ENCODE measurements at regions of chrX and their contacts with region 1.

Region 1: GRCh38 chrX:22135994-22136684 is 104.0 kb downstream of the PHEX start:
- DNase-seq: peak; percentile 30
- H3K4me3 ChIP-seq: no peak overlapping the region
- H3K27ac ChIP-seq: peak overlapping the region in 1 of 2 experiments; percentile 83; a peak in 2 of 4 replicates
- H3K4me1 ChIP-seq: peaks cover 10 to 11% of the 10 kb centered on the region in 2 experiments; a peak in 3 of 4 replicates
- H3K27me3 ChIP-seq: no peaks in the 10 kb centered on the region
- CTCF ChIP-seq: peak; percentile 88
- EP300 ChIP-seq: peak in 1 of 2 experiments; percentile 63; a peak in 1 of 4 replicates
- RAD21 ChIP-seq: peak; percentile 79

Region 2: GRCh38 chrX:21839334-21840192 is 296.6 kb before region 1 on chrX and contains the start of gene MBTPS2:
- CTCF ChIA-PET with region 1: no interaction called
- POLR2A ChIA-PET with region 1: no interaction called
- DNase-seq: peak; percentile 76
- H3K4me3 ChIP-seq: peak within 1 kb of the TSS; percentile 85 to 88
- H3K27ac ChIP-seq: peak within 1 kb of the TSS; percentile 65 to 74
- H3K4me1 ChIP-seq: no peaks in the 10 kb centered on the region; a peak in 2 of 4 replicates
- H3K27me3 ChIP-seq: no peaks in the 10 kb centered on the region; the same call in 1 of the 2 replicates
- CTCF ChIP-seq: peak; percentile 49
- EP300 ChIP-seq: peak in 1 of 2 experiments; percentile 52; a peak in 1 of 4 replicates
- RAD21 ChIP-seq: peak; percentile 63
- polyA plus RNA-seq, gene MBTPS2: 21.6 and 24.8 TPM in 2 replicates

Region 3: GRCh38 chrX:22081475-22082092 is 54.6 kb before region 1 on chrX:
- CTCF ChIA-PET with region 1: interaction called, 10 read pairs
- POLR2A ChIA-PET with region 1: no interaction called
- DNase-seq: peak; percentile 22
- H3K4me3 ChIP-seq: no peak overlapping the region
- H3K27ac ChIP-seq: no peak overlapping the region
- H3K4me1 ChIP-seq: no peaks in the 10 kb centered on the region
- H3K27me3 ChIP-seq: no peaks in the 10 kb centered on the region
- CTCF ChIP-seq: peak; percentile 94
- EP300 ChIP-seq: no peak
- RAD21 ChIP-seq: peak; percentile 57

Region 4: GRCh38 chrX:22122510-22122909 is 13.6 kb before region 1 on chrX:
- CTCF ChIA-PET with region 1: interaction called, 14 read pairs
- POLR2A ChIA-PET with region 1: no interaction called
- DNase-seq: no peak
- H3K4me3 ChIP-seq: no peak overlapping the region
- H3K27ac ChIP-seq: peak overlapping the region in 1 of 2 experiments; percentile 76; a peak in 2 of 4 replicates
- H3K4me1 ChIP-seq: no peaks in the 10 kb centered on the region
- H3K27me3 ChIP-seq: no peaks in the 10 kb centered on the region
- CTCF ChIP-seq: no peak
- EP300 ChIP-seq: peak in 1 of 2 experiments; percentile 71; a peak in 1 of 4 replicates
- RAD21 ChIP-seq: no peak

Region 5: GRCh38 chrX:22147214-22147613 is 11.1 kb after region 1 on chrX:
- CTCF ChIA-PET with region 1: interaction called, 23 read pairs
- POLR2A ChIA-PET with region 1: no interaction called
- DNase-seq: no peak
- H3K4me3 ChIP-seq: no peak overlapping the region
- H3K27ac ChIP-seq: no peak overlapping the region
- H3K4me1 ChIP-seq: no peaks in the 10 kb centered on the region
- H3K27me3 ChIP-seq: no peaks in the 10 kb centered on the region
- CTCF ChIP-seq: no peak
- EP300 ChIP-seq: no peak
- RAD21 ChIP-seq: no peak

Region 6: DNA sequence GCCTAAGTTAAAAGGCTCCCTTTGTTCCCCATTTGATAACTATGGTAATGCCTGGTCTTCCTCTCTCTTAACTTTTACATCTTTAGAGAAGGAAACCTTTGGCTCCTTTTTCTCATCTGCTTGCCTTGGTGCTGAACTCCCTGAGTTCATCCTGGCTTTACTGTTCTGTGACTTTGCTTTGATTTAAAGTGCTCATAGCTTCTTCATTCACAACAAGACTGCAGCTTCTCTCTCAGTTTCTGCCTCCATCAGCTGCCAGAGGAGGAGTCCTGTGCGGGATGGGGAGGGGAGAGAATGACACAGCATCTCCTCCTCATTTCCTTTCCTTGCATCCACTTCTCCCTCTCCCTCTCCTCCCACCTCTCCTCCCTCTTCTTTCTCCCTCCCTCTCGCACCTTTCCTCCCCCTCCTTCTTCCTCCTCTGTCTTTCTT is 178.5 kb after region 1 on chrX:
- CTCF ChIA-PET with region 1: no interaction called
- POLR2A ChIA-PET with region 1: no interaction called
- DNase-seq: no peak
- H3K4me3 ChIP-seq: no peak overlapping the region
- H3K27ac ChIP-seq: peak overlapping the region in 1 of 2 experiments; percentile 31; a peak in 1 of 4 replicates
- H3K4me1 ChIP-seq: 0 out of 4 replicates have a peak, but pooled peaks cover 0 to 3% of the 10 kb centered on the region in 2 experiments
- H3K27me3 ChIP-seq: no peaks in the 10 kb centered on the region
- CTCF ChIP-seq: no peak
- EP300 ChIP-seq: no peak
- RAD21 ChIP-seq: no peak

Region 7: DNA sequence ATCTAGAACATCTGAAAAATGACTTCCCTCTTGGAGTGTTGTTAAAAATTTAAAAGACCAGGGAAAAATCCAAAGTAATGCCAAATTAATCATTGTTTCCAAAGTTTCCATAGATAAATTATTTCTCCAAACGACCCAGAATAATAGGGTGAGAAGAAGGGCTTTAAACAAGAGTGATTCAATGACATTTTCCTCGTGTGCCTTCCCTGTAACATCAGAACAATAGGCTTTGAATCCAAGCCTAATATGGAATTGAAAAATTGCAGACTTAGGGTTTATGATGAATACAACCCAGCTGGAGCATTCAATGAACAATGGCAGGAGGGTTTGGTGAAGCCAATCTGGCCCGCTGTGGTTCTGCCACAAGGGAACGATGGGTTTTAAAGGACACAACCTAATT is 230.7 kb after region 1 on chrX:
- CTCF ChIA-PET with region 1: no interaction called
- POLR2A ChIA-PET with region 1: no interaction called
- DNase-seq: no peak
- H3K4me3 ChIP-seq: no peak overlapping the region
- H3K27ac ChIP-seq: no peak overlapping the region
- H3K4me1 ChIP-seq: no peaks in the 10 kb centered on the region
- H3K27me3 ChIP-seq: no peaks in the 10 kb centered on the region
- CTCF ChIP-seq: no peak
- EP300 ChIP-seq: no peak
- RAD21 ChIP-seq: no peak

Region 8: GRCh38 chrX:22389556-22390179 is 253.5 kb after region 1 on chrX:
- CTCF ChIA-PET with region 1: no interaction called
- POLR2A ChIA-PET with region 1: no interaction called
- DNase-seq: no peak
- H3K4me3 ChIP-seq: no peak overlapping the region
- H3K27ac ChIP-seq: peak overlapping the region in 1 of 2 experiments; percentile 70; a peak in 2 of 4 replicates
- H3K4me1 ChIP-seq: no peaks in the 10 kb centered on the region
- H3K27me3 ChIP-seq: no peaks in the 10 kb centered on the region
- CTCF ChIP-seq: no peak
- EP300 ChIP-seq: no peak
- RAD21 ChIP-seq: no peak

Region 9: GRCh38 chrX:22748093-22748999 is 612.2 kb after region 1 on chrX:
- CTCF ChIA-PET with region 1: interaction called, 21 read pairs
- POLR2A ChIA-PET with region 1: no interaction called
- DNase-seq: peak; percentile 40
- H3K4me3 ChIP-seq: no peak overlapping the region
- H3K27ac ChIP-seq: no peak overlapping the region
- H3K4me1 ChIP-seq: no peaks in the 10 kb centered on the region
- H3K27me3 ChIP-seq: no peaks in the 10 kb centered on the region
- CTCF ChIP-seq: peak; percentile 90
- EP300 ChIP-seq: no peak
- RAD21 ChIP-seq: peak; percentile 65

Measured in SK-N-SH (cell line).